Pancreas (tissue), 10 donors: ENCODE measurements at regions of chr3 and their contacts with region 1.

Region 1: GRCh38 chr3:72949016-72949415 is 47.6 kb upstream of the PPP4R2 start:
- DNase-seq: no peak
- ATAC-seq: no peak
- H3K4me3 ChIP-seq: no peak overlapping the region
- H3K27ac ChIP-seq: no peak overlapping the region
- H3K4me1 ChIP-seq: no peaks in the 10 kb centered on the region
- H3K27me3 ChIP-seq: no peaks in the 10 kb centered on the region
- CTCF ChIP-seq: no peak

Region 2: DNA sequence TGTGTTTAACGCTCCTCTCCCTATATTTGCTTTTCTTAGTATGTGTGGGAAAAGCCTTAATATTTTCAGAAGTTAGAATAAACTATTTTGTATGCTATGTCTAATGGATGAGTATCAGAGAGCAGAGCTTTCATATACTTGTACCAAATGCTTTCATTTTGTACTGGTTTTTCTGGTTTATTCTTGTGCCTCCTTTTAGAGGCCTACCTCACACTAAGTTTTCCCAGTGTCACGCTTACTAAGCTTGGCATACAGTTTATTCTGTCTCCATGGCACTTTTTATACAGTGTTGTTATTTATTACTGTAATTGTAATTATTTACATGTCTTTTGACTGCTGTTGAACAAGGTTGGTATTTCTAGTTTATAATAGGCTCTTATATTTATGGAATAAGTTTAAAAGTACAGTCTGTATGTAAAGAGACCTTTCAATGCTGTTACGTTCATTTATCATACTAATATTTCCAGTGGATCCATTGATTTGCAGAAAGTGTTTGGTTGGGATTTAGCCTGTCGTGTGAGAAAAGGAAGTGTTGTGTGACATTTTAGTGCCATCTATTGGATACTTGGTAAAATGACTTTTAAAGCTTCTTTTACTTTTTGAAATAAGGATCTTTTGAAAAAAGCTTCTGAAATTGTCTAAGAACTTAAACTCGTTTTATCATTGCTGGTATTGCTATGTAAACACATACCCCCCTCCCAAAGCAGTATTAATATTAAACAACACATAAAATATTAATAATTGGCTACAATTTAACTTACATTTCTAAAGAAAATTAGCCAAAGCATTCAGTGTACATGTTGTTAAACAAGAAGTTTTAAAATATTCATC is 107.2 kb after region 1 on chr3:
- intact Hi-C with region 1: loop called in 1 of 3 experiments (anchors 10 kb)
- DNase-seq: no peak
- ATAC-seq: peak; percentile 58 to 89 (median 86)
- H3K4me3 ChIP-seq: no peak overlapping the region
- H3K27ac ChIP-seq: no peak overlapping the region
- H3K4me1 ChIP-seq: peaks cover 0 to 5% (median 0%) of the 10 kb centered on the region in 3 donors
- H3K27me3 ChIP-seq: no peaks in the 10 kb centered on the region
- CTCF ChIP-seq: no peak

Region 3: GRCh38 chr3:73086071-73086494 is 137.1 kb after region 1 on chr3:
- intact Hi-C with region 1: loop called in 1 of 3 experiments (anchors 10 kb)
- DNase-seq: peak in 5 of 6 donors; percentile 9 to 68 (median 36)
- ATAC-seq: peak; percentile 67 to 93 (median 92)
- H3K4me3 ChIP-seq: no peak overlapping the region
- H3K27ac ChIP-seq: no peak overlapping the region
- H3K4me1 ChIP-seq: no peaks in the 10 kb centered on the region
- H3K27me3 ChIP-seq: no peaks in the 10 kb centered on the region
- CTCF ChIP-seq: peak; percentile 40 to 66 (median 58)